Activated CD4-positive, alpha-beta T cell treated with anti-CD3 and anti-CD28 coated beads for 36 hours (primary cell): ENCODE measurements at regions of chr11 and their contacts with region 1.

Region 1: DNA sequence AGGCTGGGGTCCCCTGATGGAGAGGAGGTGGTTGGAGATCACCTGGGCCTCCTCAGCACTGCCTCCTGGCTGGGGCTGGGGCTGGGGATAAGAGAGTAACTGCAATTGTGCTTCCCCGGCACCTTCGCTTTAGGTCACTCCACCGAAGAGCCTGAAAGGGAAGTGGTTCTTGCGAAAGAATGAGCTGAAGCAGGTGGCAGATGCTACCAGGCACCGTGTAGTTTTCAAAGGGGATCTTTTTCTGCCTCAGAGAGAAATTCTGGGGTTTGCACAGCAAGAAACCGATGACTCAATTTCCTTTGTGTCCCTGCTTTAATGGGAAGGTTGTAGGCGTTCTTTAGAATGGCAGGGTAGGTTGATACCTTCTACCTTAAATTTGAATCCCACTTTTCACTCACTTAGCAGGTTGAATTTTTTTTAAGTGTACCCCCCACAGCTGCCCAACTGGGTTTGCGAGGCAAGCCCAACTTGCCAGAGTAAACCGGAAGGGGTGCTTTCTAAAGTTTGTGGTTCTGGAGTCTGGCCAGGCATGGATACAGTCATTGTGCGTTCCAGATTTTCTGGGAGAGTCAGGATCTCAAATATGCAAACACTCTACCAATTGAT is 5.3 kb downstream of the CD44 start:
- DNase-seq: peak; percentile 80
- ATAC-seq: peak; percentile 49
- H3K4me3 Mint-ChIP-seq: peak overlapping the region; percentile 65
- H3K27ac Mint-ChIP-seq: peak overlapping the region; percentile 99
- H3K4me1 Mint-ChIP-seq: peaks cover 72% of the 10 kb centered on the region
- H3K27me3 Mint-ChIP-seq: no peaks in the 10 kb centered on the region

Region 2: DNA sequence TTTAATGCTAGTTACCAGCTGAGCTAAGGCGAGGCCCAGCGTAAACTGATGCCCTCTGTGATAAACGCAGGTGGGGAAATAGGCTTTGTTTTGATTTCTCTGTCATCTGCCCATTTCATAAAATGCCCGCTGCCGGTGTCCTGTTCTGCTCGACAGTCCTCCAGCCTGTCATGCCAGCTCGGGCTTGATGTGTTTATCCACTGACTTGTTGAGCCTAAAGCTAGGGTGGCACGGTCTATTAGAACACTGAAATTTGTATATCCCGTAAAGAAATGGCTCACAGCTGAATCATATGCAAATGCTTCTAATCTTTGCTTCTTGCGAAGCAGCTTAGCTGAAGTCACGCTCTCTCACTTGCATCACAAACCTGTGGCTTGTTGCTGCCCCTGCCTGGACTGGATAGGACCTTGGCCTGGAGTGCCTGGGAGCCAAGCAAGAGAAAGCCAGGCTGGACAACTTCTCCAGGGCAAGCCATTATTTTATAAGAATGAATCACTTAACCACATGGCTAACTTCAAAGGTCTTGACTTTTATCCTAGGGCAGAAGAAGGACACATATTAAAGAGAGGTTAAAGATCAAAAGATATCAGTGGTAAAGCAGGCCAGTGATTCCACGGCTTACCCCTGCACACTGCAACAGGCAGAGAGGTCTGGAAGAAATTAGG is 490.3 kb before region 1 on chr11:
- CTCF ChIA-PET with region 1: interaction called, 3 read pairs
- POLR2A ChIA-PET with region 1: interaction called, 3 read pairs
- intact Hi-C with region 1: loop called in 1 of 2 experiments (anchors 10 kb)
- DNase-seq: peak; percentile 46
- ATAC-seq: peak; percentile 39
- H3K4me3 Mint-ChIP-seq: no peak overlapping the region
- H3K27ac Mint-ChIP-seq: peak overlapping the region; percentile 13
- H3K4me1 Mint-ChIP-seq: peaks cover 55% of the 10 kb centered on the region
- H3K27me3 Mint-ChIP-seq: peaks cover 34% of the 10 kb centered on the region

Region 3: GRCh38 chr11:35013514-35014233 is 130.6 kb before region 1 on chr11:
- CTCF ChIA-PET with region 1: interaction called, 6 read pairs
- POLR2A ChIA-PET with region 1: interaction called, 4 read pairs
- intact Hi-C with region 1: loop called (anchors 1 kb)
- DNase-seq: peak; percentile 54
- ATAC-seq: peak; percentile 75
- H3K4me3 Mint-ChIP-seq: peak overlapping the region; percentile 34
- H3K27ac Mint-ChIP-seq: peak overlapping the region; percentile 74
- H3K4me1 Mint-ChIP-seq: peaks cover 49% of the 10 kb centered on the region
- H3K27me3 Mint-ChIP-seq: peaks cover 2% of the 10 kb centered on the region

Region 4: DNA sequence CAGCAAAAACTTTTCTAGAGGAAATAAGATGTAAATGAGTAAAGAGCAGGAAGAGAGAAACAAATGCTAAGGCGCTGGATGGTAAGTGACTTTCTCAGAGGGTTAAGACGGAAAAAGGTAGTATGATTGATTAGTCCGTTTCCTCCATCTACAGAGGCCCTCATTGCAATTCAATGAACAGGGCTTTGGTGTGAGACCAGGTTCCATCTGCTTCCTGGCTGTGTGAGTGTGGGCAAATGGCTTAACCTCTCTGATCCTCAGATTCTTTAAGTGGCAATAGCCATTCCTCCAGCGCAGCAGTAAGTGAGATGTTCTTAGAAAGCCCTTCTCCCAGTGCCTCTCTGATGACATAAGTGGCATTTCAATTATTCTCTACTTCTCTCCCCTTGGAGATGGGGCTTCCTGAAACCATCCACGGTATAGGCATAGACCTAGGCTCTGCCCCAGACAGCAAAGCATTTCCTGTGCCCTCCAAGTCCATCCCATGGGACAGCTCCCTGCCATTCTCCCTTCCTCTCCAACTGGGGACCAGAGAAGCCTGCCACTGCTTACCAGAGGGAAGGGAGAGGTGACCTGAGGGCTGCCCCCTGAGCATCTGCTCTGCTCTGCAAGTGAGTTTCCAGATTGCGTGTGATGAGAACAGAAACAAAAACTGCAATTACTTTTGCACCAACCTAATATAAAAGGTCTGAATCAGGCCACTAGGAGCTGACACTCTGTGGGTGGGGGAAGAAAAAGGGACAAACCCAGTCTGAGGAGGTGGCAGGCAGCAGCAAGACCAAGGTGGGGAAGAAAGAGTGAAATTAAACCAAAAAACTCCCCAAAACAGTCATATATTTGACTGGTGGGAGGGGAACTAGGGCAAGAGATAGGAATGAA is 18.0 kb before region 1 on chr11:
- CTCF ChIA-PET with region 1: interaction called, 4 read pairs
- POLR2A ChIA-PET with region 1: interaction called, 4 read pairs
- intact Hi-C with region 1: loop called in 1 of 2 experiments (anchors 2 kb)
- DNase-seq: peak; percentile 76
- ATAC-seq: peak; percentile 82
- H3K4me3 Mint-ChIP-seq: peak overlapping the region; percentile 58
- H3K27ac Mint-ChIP-seq: peak overlapping the region; percentile 92
- H3K4me1 Mint-ChIP-seq: peaks cover 69% of the 10 kb centered on the region
- H3K27me3 Mint-ChIP-seq: no peaks in the 10 kb centered on the region

Region 5: DNA sequence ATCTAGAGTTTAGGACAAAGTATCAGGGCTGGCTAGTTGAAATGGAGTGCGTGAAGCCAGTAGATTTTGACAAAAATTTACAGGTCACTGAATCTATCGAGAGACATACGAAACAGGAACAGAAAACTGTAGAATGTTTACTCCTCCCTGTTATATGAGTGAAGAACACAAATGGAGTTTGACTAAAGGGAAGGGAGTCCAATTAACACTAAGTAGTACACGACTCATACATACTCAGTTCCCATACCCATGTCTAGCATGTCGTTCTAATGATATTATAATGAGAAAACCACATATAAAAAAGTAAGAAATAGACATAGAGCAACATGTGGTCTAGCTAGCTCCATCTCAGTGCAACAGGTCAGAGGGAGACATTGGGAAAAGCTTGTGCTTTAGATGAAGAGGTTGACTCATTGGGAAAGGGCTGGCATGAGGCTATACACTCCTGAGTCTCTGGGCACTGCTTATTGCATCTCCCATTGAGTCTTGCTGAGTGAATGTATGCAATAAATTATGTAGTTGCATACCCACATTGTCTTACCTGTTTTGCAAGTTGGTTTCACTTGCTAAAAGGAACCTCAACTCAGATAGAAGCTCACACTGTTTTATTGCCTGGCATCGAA is 38.2 kb after region 1 on chr11:
- CTCF ChIA-PET with region 1: interaction called, 5 read pairs
- POLR2A ChIA-PET with region 1: interaction called, 18 read pairs
- intact Hi-C with region 1: loop called (anchors 1 kb)
- DNase-seq: no peak
- ATAC-seq: peak; percentile 16
- H3K4me3 Mint-ChIP-seq: no peak overlapping the region
- H3K27ac Mint-ChIP-seq: peak overlapping the region; percentile 44
- H3K4me1 Mint-ChIP-seq: peaks cover 78% of the 10 kb centered on the region
- H3K27me3 Mint-ChIP-seq: no peaks in the 10 kb centered on the region

Region 6: GRCh38 chr11:35337136-35337918 is 193.1 kb after region 1 on chr11:
- CTCF ChIA-PET with region 1: no interaction called
- POLR2A ChIA-PET with region 1: no interaction called
- intact Hi-C with region 1: loop called (anchors 1 to 2 kb)
- DNase-seq: peak; percentile 46
- ATAC-seq: peak; percentile 96
- H3K4me3 Mint-ChIP-seq: no peak overlapping the region
- H3K27ac Mint-ChIP-seq: peak overlapping the region; percentile 19
- H3K4me1 Mint-ChIP-seq: peaks cover 36% of the 10 kb centered on the region
- H3K27me3 Mint-ChIP-seq: no peaks in the 10 kb centered on the region